ENCODE measurements at regions of chr3 and their contacts with region 1.

Region 1: DNA sequence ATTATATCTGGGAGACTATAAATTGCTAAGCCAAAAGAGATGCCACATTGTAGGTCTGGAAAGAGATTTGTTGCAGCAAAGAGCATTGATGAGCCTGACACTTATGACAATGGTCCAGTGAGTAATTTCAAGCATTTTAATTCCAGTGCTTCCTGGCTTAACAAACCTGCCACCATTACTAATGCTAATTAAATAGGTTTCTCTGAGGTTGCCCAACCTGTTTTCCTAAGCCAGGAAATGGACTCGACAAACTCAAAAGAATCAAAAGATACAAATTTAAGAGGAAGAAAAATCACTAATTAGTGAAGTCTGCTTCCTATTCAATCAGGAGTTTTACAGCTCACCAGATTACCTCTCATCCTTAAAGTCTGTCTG is 36.7 kb upstream of the CTDSPL start:
- DNase-seq: no peak

Region 2: GRCh38 chr3:37806505-37807200 is 18.3 kb before region 1 on chr3:
- intact Hi-C with region 1: loop called in 1 of 2 experiments (anchors 1 kb)
- DNase-seq: no peak

Region 3: GRCh38 chr3:37967260-37967881 is 142.4 kb after region 1 on chr3:
- intact Hi-C with region 1: no loop called
- DNase-seq: peak; percentile 88

Measured in posterior vena cava (tissue), 2 donors.